ENCODE measurements at regions of chr1 and their contacts with region 1.

Region 1: DNA sequence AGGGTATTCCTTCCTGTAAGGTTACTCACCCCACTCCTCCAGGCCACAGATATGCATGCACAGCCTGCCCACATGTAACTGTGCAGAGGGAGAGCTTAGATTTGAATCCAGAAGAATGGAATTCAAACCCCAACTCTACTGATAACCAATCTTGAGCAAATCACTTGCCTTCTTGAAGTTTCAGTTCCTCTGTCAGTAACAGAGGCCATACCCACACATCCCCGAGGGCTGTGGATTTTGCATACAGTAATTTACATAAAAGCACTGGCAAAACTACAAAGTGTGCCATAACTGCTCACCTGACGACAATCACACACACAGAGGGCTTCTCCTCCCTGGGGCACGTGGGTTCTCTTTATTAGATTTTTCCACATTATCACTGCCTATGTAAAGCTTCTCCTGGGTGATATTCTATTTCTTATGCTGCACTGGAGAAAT is 18.6 kb downstream of the CD247 start:
- DNase-seq: peak; percentile 19 to 68
- ATAC-seq: peak; percentile 14 to 25 (median 23)
- H3K4me3 ChIP-seq: no peak overlapping the region
- H3K4me3 Mint-ChIP-seq: peak overlapping the region; percentile 87
- H3K27ac ChIP-seq: peak overlapping the region; percentile 97
- H3K27ac Mint-ChIP-seq: peak overlapping the region; percentile 91 to 100
- H3K4me1 ChIP-seq: peaks cover 82% of the 10 kb centered on the region
- H3K4me1 Mint-ChIP-seq: peaks cover 100% of the 10 kb centered on the region in 2 donors
- H3K27me3 ChIP-seq: no peaks in the 10 kb centered on the region
- H3K27me3 Mint-ChIP-seq: no peaks in the 10 kb centered on the region
- CTCF ChIP-seq: no peak

Region 2: GRCh38 chr1:166588741-166589140 is 910.9 kb before region 1 on chr1:
- intact Hi-C with region 1: no loop called
- DNase-seq: no peak
- ATAC-seq: no peak
- H3K4me3 ChIP-seq: no peak overlapping the region
- H3K4me3 Mint-ChIP-seq: no peak overlapping the region
- H3K27ac ChIP-seq: no peak overlapping the region
- H3K27ac Mint-ChIP-seq: no peak overlapping the region
- H3K4me1 ChIP-seq: no peaks in the 10 kb centered on the region
- H3K4me1 Mint-ChIP-seq: no peaks in the 10 kb centered on the region
- H3K27me3 ChIP-seq: no peaks in the 10 kb centered on the region
- H3K27me3 Mint-ChIP-seq: peaks cover 6% of the 10 kb centered on the region in 2 donors
- CTCF ChIP-seq: no peak

Region 3: DNA sequence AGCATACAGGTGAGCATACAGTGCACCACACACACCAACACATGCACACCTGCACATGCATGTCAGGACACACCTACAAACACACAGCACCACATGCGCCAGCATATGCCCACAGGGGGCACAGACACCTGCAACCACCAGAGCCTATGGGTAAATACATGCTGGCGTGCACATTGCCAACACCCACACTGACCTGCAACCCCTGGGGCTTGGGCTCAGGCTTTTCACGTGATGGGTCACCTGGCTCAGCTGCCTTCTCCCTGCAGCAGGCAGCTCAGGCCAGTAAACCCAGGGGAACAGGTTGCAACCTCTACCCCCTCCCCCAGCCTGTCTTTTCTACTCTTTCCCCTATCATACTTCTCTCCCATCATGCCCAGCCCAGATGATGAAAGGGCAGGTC is 10.6 kb after region 1 on chr1:
- intact Hi-C with region 1: loop called (anchors 1 kb)
- DNase-seq: peak; percentile 30 to 42
- ATAC-seq: peak; percentile 16 to 26 (median 24)
- H3K4me3 ChIP-seq: no peak overlapping the region
- H3K4me3 Mint-ChIP-seq: peak overlapping the region; percentile 77
- H3K27ac ChIP-seq: peak overlapping the region; percentile 62
- H3K27ac Mint-ChIP-seq: peak overlapping the region; percentile 91 to 100
- H3K4me1 ChIP-seq: peaks cover 83% of the 10 kb centered on the region
- H3K4me1 Mint-ChIP-seq: peaks cover 77 to 88% of the 10 kb centered on the region in 2 donors
- H3K27me3 ChIP-seq: no peaks in the 10 kb centered on the region
- H3K27me3 Mint-ChIP-seq: no peaks in the 10 kb centered on the region
- CTCF ChIP-seq: no peak

Measured in natural killer cell (primary cell).